ENCODE measurements at regions of chr9 and their contacts with region 1.

Region 1: GRCh38 chr9:129783516-129784361 is 19.2 kb upstream of the TOR1B start:
- DNase-seq: peak; percentile 91
- H3K4me3 ChIP-seq: no peak overlapping the region
- H3K27ac ChIP-seq: no peak overlapping the region
- H3K4me1 ChIP-seq: no peaks in the 10 kb centered on the region
- H3K27me3 ChIP-seq: no peaks in the 10 kb centered on the region; the same call in 1 of the 2 replicates
- CTCF ChIP-seq: peak; percentile 93
- EP300 ChIP-seq: no peak
- RAD21 ChIP-seq: peak; percentile 99

Region 2: GRCh38 chr9:129436751-129437625 is 346.8 kb before region 1 on chr9:
- CTCF ChIA-PET with region 1: no interaction called
- POLR2A ChIA-PET with region 1: no interaction called
- DNase-seq: peak; percentile 88
- H3K4me3 ChIP-seq: peak overlapping the region; percentile 51 to 70
- H3K27ac ChIP-seq: peak overlapping the region in 1 of 2 experiments; percentile 64; a peak in 3 of 4 replicates
- H3K4me1 ChIP-seq: peaks cover 0 to 26% of the 10 kb centered on the region in 2 experiments; a peak in 1 of 4 replicates
- H3K27me3 ChIP-seq: no peaks in the 10 kb centered on the region
- CTCF ChIP-seq: no peak
- EP300 ChIP-seq: 0 out of 4 replicates have a peak, but pooled peaks of 1 of the 2 experiments have one; percentile 17
- RAD21 ChIP-seq: no peak; the same call in 1 of the 2 replicates

Region 3: DNA sequence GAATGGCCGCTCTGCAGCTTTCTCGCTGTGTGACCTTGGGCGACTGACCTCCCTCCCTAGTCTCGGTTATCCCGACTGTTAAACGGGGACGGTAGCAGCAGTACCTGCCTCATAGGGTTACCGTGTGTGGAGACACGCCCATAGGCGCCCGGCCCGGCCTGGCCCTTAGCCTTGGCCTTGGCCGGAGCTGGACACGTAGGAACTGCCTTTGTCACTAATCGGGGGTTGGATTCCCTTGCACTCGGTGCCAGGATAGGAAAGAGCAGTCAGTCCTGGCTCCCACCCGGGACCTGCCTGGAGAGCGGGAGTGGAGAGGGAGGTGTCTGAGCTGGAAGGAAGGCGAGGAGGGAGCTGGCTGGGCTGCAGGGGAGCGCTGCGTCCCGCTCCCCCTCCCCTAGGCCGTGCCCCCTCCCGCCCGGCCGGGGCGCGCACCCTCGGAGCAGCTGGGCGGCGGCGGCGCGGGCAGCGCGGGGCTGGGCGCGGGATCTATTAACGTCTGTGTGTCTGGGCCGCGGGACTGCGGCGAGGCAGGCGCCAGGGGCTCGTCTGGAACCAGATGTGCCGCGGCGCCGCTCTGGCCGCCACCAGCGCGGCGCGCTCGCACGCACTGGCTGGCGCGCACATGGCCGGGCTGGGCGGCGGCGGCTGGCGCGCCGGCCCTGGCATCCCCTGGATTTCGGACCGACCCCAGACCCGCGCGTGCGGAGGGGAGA is 86.6 kb before region 1 on chr9:
- CTCF ChIA-PET with region 1: interaction called, 10 read pairs
- POLR2A ChIA-PET with region 1: no interaction called
- DNase-seq: peak; percentile 96
- H3K4me3 ChIP-seq: peak overlapping the region in 1 of 2 experiments; percentile 42; a peak in 3 of 4 replicates
- H3K27ac ChIP-seq: peak overlapping the region in 1 of 2 experiments; percentile 88; a peak in 2 of 4 replicates
- H3K4me1 ChIP-seq: peaks cover 0 to 18% of the 10 kb centered on the region in 2 experiments; a peak in 2 of 4 replicates
- H3K27me3 ChIP-seq: no peaks in the 10 kb centered on the region
- CTCF ChIP-seq: no peak
- EP300 ChIP-seq: no peak
- RAD21 ChIP-seq: no peak

Region 4: GRCh38 chr9:129752915-129753729 is 30.6 kb before region 1 on chr9 and contains the start of gene PTGES:
- CTCF ChIA-PET with region 1: interaction called, 11 read pairs
- POLR2A ChIA-PET with region 1: no interaction called
- DNase-seq: peak; percentile 86
- H3K4me3 ChIP-seq: peak within 1 kb of the TSS; percentile 28 to 29; a peak in 3 of 4 replicates
- H3K27ac ChIP-seq: no peak within 1 kb of the TSS; a peak in 1 of 4 replicates
- H3K4me1 ChIP-seq: peaks cover 5 to 20% of the 10 kb centered on the region in 2 experiments; a peak in 2 of 4 replicates
- H3K27me3 ChIP-seq: no peaks in the 10 kb centered on the region
- CTCF ChIP-seq: no peak
- EP300 ChIP-seq: no peak
- RAD21 ChIP-seq: no peak
- polyA plus RNA-seq, gene PTGES: 3.2 and 5.2 TPM in 2 replicates